GM10248 (cell line): ENCODE measurements at regions of chr4 and their contacts with region 1.

Region 1: GRCh38 chr4:64539234-64539849 is 130.1 kb upstream of the TECRL start:
- DNase-seq: peak; percentile 32
- CTCF ChIP-seq: peak; percentile 80

Region 2: DNA sequence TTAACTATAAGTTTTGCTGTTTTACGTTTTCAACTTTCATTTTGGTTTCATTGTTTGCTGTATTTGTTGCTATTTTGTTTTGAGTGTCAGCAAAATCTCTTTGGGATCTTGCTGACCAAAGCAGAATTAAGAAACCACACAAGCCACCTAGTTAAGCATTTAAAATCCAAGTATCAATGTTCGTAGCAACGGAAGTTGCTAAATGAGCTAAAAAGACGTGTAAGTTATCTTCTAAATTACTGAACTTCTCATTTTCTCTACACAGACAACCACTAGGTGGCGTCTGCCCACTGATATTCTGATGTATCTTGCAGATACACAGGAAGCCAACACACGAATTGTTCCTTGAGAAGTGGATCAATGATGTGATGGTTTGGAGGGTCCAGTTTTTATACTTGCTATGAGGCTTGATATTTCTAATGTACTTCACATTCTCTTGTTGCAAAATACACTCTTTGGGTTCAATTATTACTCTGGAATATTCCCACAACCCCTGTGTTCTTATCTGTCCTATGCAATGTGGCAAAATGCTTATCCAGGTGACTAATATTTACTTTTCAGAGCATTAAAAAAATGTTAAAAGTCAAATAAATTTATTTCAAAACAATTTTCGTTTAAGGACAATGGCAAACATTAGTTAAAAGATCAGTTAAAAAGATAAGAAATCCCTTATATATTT is 380.6 kb before region 1 on chr4:
- CTCF ChIA-PET with region 1: interaction called, 18 read pairs
- POLR2A ChIA-PET with region 1: no interaction called
- DNase-seq: peak; percentile 36
- CTCF ChIP-seq: peak; percentile 78

Region 3: GRCh38 chr4:64341711-64342110 is 197.6 kb before region 1 on chr4:
- CTCF ChIA-PET with region 1: no interaction called
- POLR2A ChIA-PET with region 1: no interaction called
- DNase-seq: no peak
- CTCF ChIP-seq: no peak